Pancreas (tissue), 10 donors: ENCODE measurements at regions of chr5 and their contacts with region 1.

Region 1: GRCh38 chr5:149990518-149991376 is 9.7 kb downstream of the TIGD6 start:
- DNase-seq: peak; percentile 55 to 79 (median 64)
- ATAC-seq: peak; percentile 82 to 100 (median 98)
- H3K4me3 ChIP-seq: no peak overlapping the region
- H3K27ac ChIP-seq: no peak overlapping the region
- H3K4me1 ChIP-seq: no peaks in the 10 kb centered on the region
- H3K27me3 ChIP-seq: no peaks in the 10 kb centered on the region
- CTCF ChIP-seq: peak; percentile 75 to 92 (median 88)

Region 2: DNA sequence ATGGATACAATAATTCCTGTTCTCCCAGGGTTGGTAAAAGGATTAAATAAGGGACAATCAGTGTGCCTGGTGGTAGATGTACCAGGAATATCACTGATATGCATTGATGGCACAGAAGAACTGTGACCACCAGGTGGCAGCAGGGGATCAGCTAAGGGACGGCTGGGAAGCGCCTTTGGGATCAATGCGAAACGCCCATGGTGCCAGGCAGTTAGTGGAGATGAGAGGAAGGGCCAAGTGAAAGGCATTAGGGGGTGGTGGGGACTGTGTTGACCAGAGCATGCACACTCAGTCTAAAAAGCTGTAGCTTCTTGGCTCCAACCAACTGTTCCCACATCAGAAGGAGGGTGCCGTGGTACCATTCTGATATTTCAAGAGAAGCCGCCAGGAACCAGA is 353.9 kb before region 1 on chr5:
- intact Hi-C with region 1: loop called in 1 of 3 experiments (anchors 10 kb)
- DNase-seq: peak; percentile 49 to 89 (median 68)
- ATAC-seq: peak; percentile 82 to 88 (median 84)
- H3K4me3 ChIP-seq: no peak overlapping the region
- H3K27ac ChIP-seq: no peak overlapping the region
- H3K4me1 ChIP-seq: no peaks in the 10 kb centered on the region
- H3K27me3 ChIP-seq: no peaks in the 10 kb centered on the region
- CTCF ChIP-seq: peak; percentile 20 to 71 (median 64)

Region 3: DNA sequence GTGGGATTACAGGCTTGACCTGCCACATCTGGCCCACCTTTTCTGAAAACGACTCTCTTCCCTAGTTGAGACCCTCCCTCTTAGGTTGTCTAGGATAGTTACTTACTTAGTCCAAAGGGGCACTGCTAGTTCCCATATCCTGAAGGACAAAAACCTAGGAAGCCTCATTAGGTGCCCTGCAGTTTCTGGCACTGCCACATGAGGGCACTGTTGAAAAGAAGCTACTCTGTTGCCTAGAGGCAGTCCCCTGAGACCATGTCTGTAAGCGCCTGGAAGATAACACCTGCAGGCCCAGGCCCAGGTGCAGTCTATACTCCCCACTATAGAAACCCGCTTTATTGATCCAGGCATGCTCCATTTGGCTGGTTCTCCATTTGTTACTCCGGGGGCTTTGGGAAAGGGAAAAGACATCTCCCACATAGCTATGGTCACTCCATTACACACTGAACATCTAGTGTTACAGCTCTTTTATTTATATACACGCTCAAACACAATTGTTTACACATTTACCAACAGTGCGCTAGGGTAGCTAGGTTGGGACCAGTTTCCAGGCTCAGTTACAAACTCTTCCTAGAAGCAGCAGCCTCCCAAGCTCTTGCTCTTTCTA is 334.1 kb before region 1 on chr5:
- intact Hi-C with region 1: no loop called
- DNase-seq: peak in 1 of 6 donors; percentile 11
- ATAC-seq: peak in 2 of 4 donors; percentile 24 to 45
- H3K4me3 ChIP-seq: no peak overlapping the region
- H3K27ac ChIP-seq: no peak overlapping the region
- H3K4me1 ChIP-seq: peaks cover 10 to 12% (median 11%) of the 10 kb centered on the region in 3 donors
- H3K27me3 ChIP-seq: no peaks in the 10 kb centered on the region
- CTCF ChIP-seq: peak; percentile 22 to 44 (median 30)

Region 4: DNA sequence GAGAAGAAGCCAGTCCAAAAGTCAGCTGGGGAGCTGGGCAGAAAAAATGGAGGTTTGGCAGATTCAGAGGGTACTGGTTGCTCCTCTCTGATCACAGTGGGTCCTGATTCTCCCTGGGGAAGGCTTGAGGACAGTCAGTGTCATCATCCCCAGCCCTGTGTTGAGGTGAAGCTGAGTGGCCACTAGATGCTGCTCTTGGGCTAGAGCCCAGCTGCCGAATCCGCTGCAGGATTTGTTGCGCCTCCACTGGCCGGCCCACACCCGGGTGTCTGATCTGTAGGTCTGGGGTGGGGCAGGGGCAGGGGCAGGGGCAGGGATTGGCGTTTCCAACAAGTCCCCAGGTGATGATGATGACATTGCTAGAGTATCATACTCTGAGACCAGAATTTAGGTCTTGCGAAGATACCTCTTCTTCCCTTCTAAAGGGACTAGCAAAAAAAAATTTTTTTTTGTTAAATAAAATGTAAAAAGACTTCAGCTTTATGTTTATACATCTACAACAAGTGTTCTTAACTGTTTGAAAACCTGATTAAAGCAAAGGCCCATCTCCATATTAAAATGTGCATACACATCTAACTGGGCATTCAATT is 153.0 kb before region 1 on chr5:
- intact Hi-C with region 1: loop called (anchors 5 to 10 kb)
- DNase-seq: peak in 1 of 6 donors; percentile 24
- ATAC-seq: peak in 3 of 4 donors; percentile 52 to 79 (median 55)
- H3K4me3 ChIP-seq: no peak overlapping the region
- H3K27ac ChIP-seq: no peak overlapping the region
- H3K4me1 ChIP-seq: no peaks in the 10 kb centered on the region
- H3K27me3 ChIP-seq: no peaks in the 10 kb centered on the region
- CTCF ChIP-seq: peak in 2 of 4 donors; percentile 10 to 20

Region 5: GRCh38 chr5:149940077-149940574 is 50.6 kb before region 1 on chr5:
- intact Hi-C with region 1: loop called in 1 of 3 experiments (anchors 10 kb)
- DNase-seq: no peak
- ATAC-seq: peak in 1 of 4 donors; percentile 18
- H3K4me3 ChIP-seq: no peak overlapping the region
- H3K27ac ChIP-seq: no peak overlapping the region
- H3K4me1 ChIP-seq: peaks cover 0 to 9% (median 0%) of the 10 kb centered on the region in 3 donors
- H3K27me3 ChIP-seq: no peaks in the 10 kb centered on the region
- CTCF ChIP-seq: no peak

Region 6: GRCh38 chr5:150263801-150264621 is 273.3 kb after region 1 on chr5:
- intact Hi-C with region 1: no loop called
- DNase-seq: peak in 4 of 6 donors; percentile 39 to 83 (median 70)
- ATAC-seq: peak; percentile 66 to 83 (median 72)
- H3K4me3 ChIP-seq: no peak overlapping the region
- H3K27ac ChIP-seq: no peak overlapping the region
- H3K4me1 ChIP-seq: peaks cover 13 to 25% (median 17%) of the 10 kb centered on the region in 3 donors
- H3K27me3 ChIP-seq: no peaks in the 10 kb centered on the region
- CTCF ChIP-seq: no peak